ENCODE measurements at regions of chr4 and their contacts with region 1.

Region 1: GRCh38 chr4:53196882-53197771 is 168.7 kb downstream of the SCFD2 start:
- DNase-seq: no peak
- ATAC-seq: peak in 6 of 8 donors; percentile 56 to 75 (median 61)
- H3K4me3 ChIP-seq: no peak overlapping the region
- H3K27ac ChIP-seq: peak overlapping the region in 1 of 10 donors; percentile 37
- H3K4me1 ChIP-seq: peaks cover 0 to 16% (median 4%) of the 10 kb centered on the region in 9 donors
- H3K27me3 ChIP-seq: no peaks in the 10 kb centered on the region
- CTCF ChIP-seq: peak; percentile 65 to 85 (median 79)

Region 2: GRCh38 chr4:53377319-53378170 is 180.4 kb after region 1 on chr4 and contains the start of gene FIP1L1:
- intact Hi-C with region 1: loop called in 1 of 10 experiments (anchors 10 kb)
- DNase-seq: peak; percentile 94 to 96
- ATAC-seq: peak; percentile 99 to 100 (median 100)
- H3K4me3 ChIP-seq: peak within 1 kb of the TSS; percentile 72 to 93 (median 86)
- H3K27ac ChIP-seq: peak within 1 kb of the TSS; percentile 67 to 94 (median 90)
- H3K4me1 ChIP-seq: peaks cover 0 to 33% (median 18%) of the 10 kb centered on the region in 9 donors
- H3K27me3 ChIP-seq: peaks cover 0 to 2% (median 0%) of the 10 kb centered on the region in 7 donors
- CTCF ChIP-seq: peak in 1 of 9 donors; percentile 8
- total RNA-seq, gene FIP1L1: 26.9 to 47.0 (median 33.7) TPM

Region 3: GRCh38 chr4:53908661-53909078 is 711.5 kb after region 1 on chr4:
- intact Hi-C with region 1: loop called in 5 of 10 experiments (anchors 10 kb)
- DNase-seq: peak in 1 of 2 donors; percentile 59
- ATAC-seq: peak; percentile 80 to 93 (median 91)
- H3K4me3 ChIP-seq: peak overlapping the region in 7 of 10 donors; percentile 8 to 30 (median 23)
- H3K27ac ChIP-seq: peak overlapping the region in 7 of 10 donors; percentile 10 to 66 (median 51)
- H3K4me1 ChIP-seq: peaks cover 4 to 39% (median 26%) of the 10 kb centered on the region in 9 donors
- H3K27me3 ChIP-seq: peaks cover 0 to 52% (median 27%) of the 10 kb centered on the region in 7 donors
- CTCF ChIP-seq: peak; percentile 7 to 89 (median 74)

Region 4: DNA sequence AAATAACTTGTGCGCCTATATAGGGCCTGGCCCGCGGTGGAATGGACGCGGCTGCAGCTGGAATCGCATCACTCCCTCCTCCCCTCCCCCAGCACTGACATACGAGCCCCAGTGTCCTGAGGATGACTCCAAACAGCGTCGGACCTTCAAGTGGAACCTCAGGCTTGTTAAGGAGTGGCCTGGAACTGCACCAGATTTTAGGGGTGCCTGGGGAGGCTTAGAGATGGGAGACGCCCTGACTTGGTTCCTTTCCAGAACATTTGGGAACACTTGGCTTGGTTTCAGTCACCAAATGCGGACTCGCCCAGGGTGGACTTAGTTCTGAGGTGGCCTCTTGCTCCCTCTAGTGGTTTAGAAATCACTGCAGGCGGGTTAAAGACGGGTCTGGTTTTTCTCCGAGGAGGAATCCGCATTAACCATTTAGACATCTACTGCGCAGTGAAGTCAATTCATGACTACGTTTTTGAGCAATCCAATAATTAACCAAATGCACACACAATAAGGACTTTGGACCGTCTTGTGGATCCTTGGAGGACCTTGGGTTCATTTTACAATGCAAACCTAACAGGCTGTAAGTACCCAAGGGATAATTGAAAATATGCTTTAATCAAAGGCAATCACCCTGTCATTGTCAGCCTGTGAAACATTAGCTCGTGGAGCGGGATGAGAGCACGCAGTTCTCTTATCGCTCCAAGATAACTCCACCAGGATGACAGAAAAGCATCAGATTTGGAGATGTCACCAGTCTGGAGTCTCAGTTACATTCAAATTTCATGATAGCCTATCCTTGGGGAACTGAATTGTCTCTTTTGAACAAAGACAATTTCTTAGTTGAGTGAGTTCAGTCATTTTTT is 1020.7 kb after region 1 on chr4:
- intact Hi-C with region 1: loop called in 2 of 10 experiments (anchors 5 kb)
- DNase-seq: peak; percentile 50 to 84
- ATAC-seq: peak; percentile 89 to 95 (median 91)
- H3K4me3 ChIP-seq: peak overlapping the region in 9 of 10 donors; percentile 3 to 52 (median 48)
- H3K27ac ChIP-seq: peak overlapping the region in 2 of 10 donors; percentile 7 to 67
- H3K4me1 ChIP-seq: peaks cover 0 to 19% (median 10%) of the 10 kb centered on the region in 9 donors
- H3K27me3 ChIP-seq: peaks cover 0 to 40% (median 29%) of the 10 kb centered on the region in 7 donors
- CTCF ChIP-seq: peak; percentile 84 to 97 (median 93)